PC-3 (cell line): ENCODE measurements at regions of chr11 and their contacts with region 1.

Region 1: GRCh38 chr11:83249972-83250593 is 36.1 kb downstream of the CCDC90B start:
- DNase-seq: peak; percentile 70
- ATAC-seq: peak; percentile 89
- H3K4me3 ChIP-seq: no peak overlapping the region
- H3K27ac ChIP-seq: no peak overlapping the region
- H3K4me1 ChIP-seq: peaks cover 2% of the 10 kb centered on the region; the same call in 1 of the 2 replicates
- H3K27me3 ChIP-seq: no peaks in the 10 kb centered on the region
- CTCF ChIP-seq: peak; percentile 89

Region 2: DNA sequence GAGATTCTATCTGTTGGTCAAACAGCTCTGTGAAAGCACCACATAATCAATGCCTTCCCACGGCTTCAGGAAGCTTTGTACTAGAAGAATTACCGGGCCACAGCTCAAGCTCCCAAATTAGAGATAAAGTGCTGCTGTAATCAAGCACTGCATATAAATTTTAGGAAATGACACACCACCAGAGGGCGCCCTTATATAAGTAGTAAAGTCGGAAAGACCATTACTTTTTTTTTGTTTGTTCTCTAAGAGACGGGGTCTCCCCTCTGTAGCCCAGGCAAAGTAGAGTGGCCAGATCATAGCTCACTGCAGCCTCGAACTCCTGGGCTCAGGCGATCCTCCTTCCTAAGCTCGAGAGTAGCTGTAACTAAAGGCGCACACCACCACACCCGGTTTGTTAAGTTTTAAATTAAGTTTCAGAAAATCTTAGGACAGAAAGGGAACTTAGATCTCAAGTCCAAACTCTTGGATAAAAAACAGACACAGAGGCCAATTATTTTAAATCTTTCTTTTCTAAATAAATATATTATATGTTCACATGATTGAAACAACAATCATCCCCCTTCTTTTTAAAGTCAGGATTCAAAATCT is 382.5 kb before region 1 on chr11:
- CTCF ChIA-PET with region 1: interaction called, 7 read pairs
- POLR2A ChIA-PET with region 1: no interaction called
- intact Hi-C with region 1: loop called (anchors 1 kb)
- DNase-seq: peak; percentile 92
- ATAC-seq: peak; percentile 31
- H3K4me3 ChIP-seq: peak overlapping the region; percentile 40; the same call in 1 of the 2 replicates
- H3K27ac ChIP-seq: no peak overlapping the region
- H3K4me1 ChIP-seq: peaks cover 11% of the 10 kb centered on the region
- H3K27me3 ChIP-seq: no peaks in the 10 kb centered on the region
- CTCF ChIP-seq: peak; percentile 95

Region 3: DNA sequence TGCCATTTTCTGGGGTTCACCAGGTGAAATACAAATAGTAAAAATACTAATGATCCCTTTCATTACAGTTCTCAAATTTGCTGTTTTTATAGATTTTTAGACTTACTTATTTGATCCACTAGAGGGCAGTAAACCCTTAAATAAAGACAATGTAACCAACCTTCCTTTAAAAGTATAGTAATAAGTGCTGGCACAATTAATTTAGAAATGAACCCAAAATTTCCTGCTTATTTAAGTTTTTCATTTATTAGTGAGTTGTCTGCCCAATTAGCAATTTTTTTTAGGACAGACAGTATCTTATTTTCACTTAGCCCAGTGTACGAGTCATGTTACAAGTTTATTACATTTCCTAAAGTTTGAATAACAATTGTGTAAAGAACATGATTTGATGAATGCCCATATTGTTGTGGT is 343.8 kb before region 1 on chr11:
- CTCF ChIA-PET with region 1: no interaction called
- POLR2A ChIA-PET with region 1: no interaction called
- intact Hi-C with region 1: loop called (anchors 1 kb)
- DNase-seq: peak; percentile 64
- ATAC-seq: no peak
- H3K4me3 ChIP-seq: no peak overlapping the region
- H3K27ac ChIP-seq: no peak overlapping the region
- H3K4me1 ChIP-seq: peaks cover 18% of the 10 kb centered on the region
- H3K27me3 ChIP-seq: no peaks in the 10 kb centered on the region
- CTCF ChIP-seq: peak; percentile 89

Region 4: GRCh38 chr11:83087035-83087434 is 163.0 kb before region 1 on chr11:
- CTCF ChIA-PET with region 1: interaction called, 4 read pairs
- POLR2A ChIA-PET with region 1: no interaction called
- intact Hi-C with region 1: loop called (anchors 2 kb)
- DNase-seq: peak; percentile 62
- ATAC-seq: peak; percentile 74
- H3K4me3 ChIP-seq: no peak overlapping the region
- H3K27ac ChIP-seq: no peak overlapping the region
- H3K4me1 ChIP-seq: peaks cover 1% of the 10 kb centered on the region
- H3K27me3 ChIP-seq: no peaks in the 10 kb centered on the region
- CTCF ChIP-seq: peak; percentile 69

Region 5: DNA sequence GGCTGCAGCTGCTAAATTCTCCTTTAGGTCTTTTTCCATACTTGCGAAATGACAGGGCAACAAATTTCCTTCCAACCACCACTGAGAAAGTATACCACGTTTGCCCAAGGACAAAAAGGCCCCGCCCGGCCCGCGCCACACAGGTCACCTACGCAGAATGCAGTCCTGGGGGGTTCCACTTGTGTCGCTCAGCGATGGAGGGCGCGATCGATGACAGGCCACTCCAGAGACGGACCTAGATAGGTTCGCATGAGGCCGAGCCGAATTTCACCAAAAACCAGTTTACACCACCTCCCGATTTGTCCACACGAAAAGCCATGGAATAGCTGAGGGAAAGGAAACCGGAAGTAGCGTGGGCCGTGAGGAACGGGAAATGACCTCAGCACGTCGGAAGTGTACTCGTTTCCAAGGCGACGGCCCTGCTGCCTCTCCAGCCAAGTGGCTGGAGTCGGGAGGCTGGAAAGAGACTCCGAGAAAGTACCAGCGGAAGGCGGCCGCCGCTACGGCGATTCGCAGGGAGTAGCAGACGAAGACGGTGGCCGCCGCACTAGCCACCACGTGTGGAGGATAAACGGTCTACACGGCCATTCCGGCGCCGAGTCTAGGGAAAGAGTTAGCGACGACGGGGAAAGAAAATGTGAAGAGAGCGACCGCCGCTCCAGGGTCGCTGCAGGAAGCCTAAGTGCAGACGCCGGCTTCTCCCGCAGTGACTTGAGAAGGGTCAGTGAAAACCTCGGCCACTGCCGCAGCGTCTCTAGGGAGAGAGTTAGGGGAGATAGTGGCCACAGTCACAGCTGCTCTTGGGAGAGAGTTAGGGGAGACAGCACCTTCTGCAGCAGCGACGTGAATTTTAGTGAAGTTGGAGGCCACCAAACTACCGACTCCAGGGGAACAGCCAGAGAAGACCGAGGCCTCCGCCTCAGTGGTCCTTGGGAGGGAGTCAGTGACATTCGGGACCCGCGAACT is 56.5 kb before region 1 on chr11 and contains the start of gene ANKRD42:
- CTCF ChIA-PET with region 1: no interaction called
- POLR2A ChIA-PET with region 1: no interaction called
- intact Hi-C with region 1: loop called (anchors 5 kb)
- DNase-seq: peak; percentile 98
- ATAC-seq: peak; percentile 84
- H3K4me3 ChIP-seq: peak within 1 kb of the TSS; percentile 96
- H3K27ac ChIP-seq: peak within 1 kb of the TSS; percentile 58
- H3K4me1 ChIP-seq: peaks cover 29% of the 10 kb centered on the region
- H3K27me3 ChIP-seq: no peaks in the 10 kb centered on the region
- CTCF ChIP-seq: no peak
- total RNA-seq, gene ANKRD42: 6.6 and 11.2 TPM in 2 replicates

Region 6: DNA sequence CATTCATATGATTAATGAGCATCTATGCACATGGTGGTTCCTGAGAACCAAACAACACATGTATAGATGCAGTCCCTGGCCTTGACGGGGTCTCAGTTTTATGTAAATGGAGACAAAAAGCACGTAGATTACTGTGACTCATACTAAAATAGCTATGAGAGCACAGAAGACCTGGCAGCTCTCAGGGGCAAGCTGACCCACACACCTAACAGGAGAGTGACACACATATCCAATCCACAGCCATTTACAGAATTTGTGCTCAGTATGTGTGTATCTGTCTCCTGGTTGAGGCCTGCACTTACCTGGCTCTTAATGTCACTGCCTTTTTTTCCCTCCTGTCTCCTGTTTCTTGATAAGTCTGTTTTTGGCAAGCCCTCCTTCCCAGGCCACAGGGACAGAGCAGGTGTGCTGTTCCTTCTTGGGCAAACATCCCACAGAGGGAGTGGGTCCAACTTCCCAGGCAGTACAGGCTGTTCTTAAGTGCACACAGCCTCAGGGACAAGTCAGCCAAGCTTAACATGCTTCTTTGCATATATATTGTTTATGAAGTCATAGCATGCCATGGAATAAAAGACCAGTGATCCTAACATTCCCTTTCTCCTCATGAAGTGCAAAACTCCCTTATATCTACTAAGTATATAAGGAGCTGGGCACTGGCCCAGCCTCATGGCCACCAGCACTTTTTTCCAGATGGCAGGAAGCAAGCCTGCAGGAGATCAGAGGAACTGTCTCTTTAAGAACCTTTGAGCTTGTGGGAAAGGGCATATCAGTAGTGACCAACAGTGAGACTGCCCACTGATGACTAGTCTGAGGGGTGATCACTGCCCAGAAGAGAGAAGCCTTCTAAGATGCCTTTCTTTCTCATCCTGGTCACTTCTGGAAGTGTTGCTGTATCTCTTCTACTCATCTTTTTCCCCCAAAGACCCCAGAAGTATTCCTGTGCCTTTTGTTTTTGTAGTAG is 160.8 kb after region 1 on chr11:
- CTCF ChIA-PET with region 1: no interaction called
- POLR2A ChIA-PET with region 1: no interaction called
- intact Hi-C with region 1: no loop called
- DNase-seq: no peak
- ATAC-seq: no peak
- H3K4me3 ChIP-seq: no peak overlapping the region
- H3K27ac ChIP-seq: no peak overlapping the region
- H3K4me1 ChIP-seq: no peaks in the 10 kb centered on the region
- H3K27me3 ChIP-seq: no peaks in the 10 kb centered on the region
- CTCF ChIP-seq: no peak